Astrocyte of the cerebellum (primary cell): ENCODE measurements at regions of chr2 and their contacts with region 1.

Region 1: GRCh38 chr2:67446491-67446911 is 49.4 kb downstream of the ETAA1 start:
- DNase-seq: no peak
- H3K4me3 ChIP-seq: no peak overlapping the region
- CTCF ChIP-seq: no peak

Region 2: GRCh38 chr2:67544286-67544685 is 97.8 kb after region 1 on chr2:
- in situ Hi-C with region 1: loop called (anchors 5 kb)
- DNase-seq: no peak
- H3K4me3 ChIP-seq: no peak overlapping the region
- CTCF ChIP-seq: no peak